T-cell (primary cell): ENCODE measurements at regions of chr2 and their contacts with region 1.

Region 1: DNA sequence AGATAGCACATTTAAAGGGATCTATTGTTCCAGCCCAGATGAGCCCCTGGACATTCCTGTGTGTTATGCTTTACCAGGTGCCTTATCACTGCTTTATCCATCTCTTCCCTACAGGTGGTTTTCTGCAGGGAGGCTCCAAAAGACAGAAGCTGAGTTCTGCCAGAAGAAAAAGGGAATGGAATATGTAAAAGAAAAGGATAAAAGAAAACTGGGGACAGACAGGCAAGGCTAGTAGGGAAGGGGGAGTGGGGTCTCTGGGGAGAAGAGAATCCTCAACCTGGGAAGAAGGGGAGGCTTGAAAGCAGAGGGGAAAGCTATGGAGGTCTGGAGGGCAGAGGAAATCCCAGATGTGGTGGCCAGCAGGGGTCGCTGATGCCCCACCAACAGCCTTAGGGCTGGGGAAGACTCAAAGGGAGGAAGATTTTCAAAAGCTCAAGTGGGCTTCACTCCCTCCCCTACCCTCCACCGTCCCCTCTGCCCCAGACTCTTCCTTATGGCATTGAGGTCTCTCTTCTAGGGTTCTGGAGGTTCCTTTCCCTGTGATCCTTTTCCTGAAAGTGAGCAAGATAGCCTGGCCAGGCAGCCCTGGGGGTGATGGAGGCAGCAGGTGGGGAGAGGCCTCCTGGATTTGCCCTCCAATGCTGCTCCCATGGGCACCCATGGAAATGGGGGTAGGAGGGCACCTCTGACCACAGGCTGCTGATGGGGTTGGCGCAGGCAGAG is 178.1 kb upstream of the PKDCC start:
- DNase-seq: peak; percentile 17 to 85 (median 65)
- ATAC-seq: peak; percentile 65 to 79 (median 74)
- H3K4me3 ChIP-seq: no peak overlapping the region
- H3K4me3 Mint-ChIP-seq: no peak overlapping the region
- H3K27ac ChIP-seq: no peak overlapping the region
- H3K27ac Mint-ChIP-seq: peak overlapping the region in 1 of 2 donors; percentile 44
- H3K4me1 ChIP-seq: peaks cover 0 to 20% of the 10 kb centered on the region in 2 experiments
- H3K4me1 Mint-ChIP-seq: peaks cover 0 to 31% (median 7%) of the 10 kb centered on the region in 3 donors
- H3K27me3 ChIP-seq: peaks cover 0 to 25% of the 10 kb centered on the region in 2 experiments
- H3K27me3 Mint-ChIP-seq: peaks cover 0 to 7% of the 10 kb centered on the region in 2 donors

Region 2: GRCh38 chr2:41729800-41730364 is 139.8 kb before region 1 on chr2:
- CTCF ChIA-PET with region 1: no interaction called
- POLR2A ChIA-PET with region 1: no interaction called
- DNase-seq: no peak
- ATAC-seq: no peak
- H3K4me3 ChIP-seq: no peak overlapping the region
- H3K4me3 Mint-ChIP-seq: no peak overlapping the region
- H3K27ac ChIP-seq: no peak overlapping the region
- H3K27ac Mint-ChIP-seq: no peak overlapping the region
- H3K4me1 ChIP-seq: no peaks in the 10 kb centered on the region
- H3K4me1 Mint-ChIP-seq: no peaks in the 10 kb centered on the region
- H3K27me3 ChIP-seq: peaks cover 0 to 8% of the 10 kb centered on the region in 2 experiments
- H3K27me3 Mint-ChIP-seq: peaks cover 13 to 22% of the 10 kb centered on the region in 2 donors

Region 3: GRCh38 chr2:41840702-41841551 is 28.8 kb before region 1 on chr2:
- CTCF ChIA-PET with region 1: interaction called, 3 to 20 read pairs
- POLR2A ChIA-PET with region 1: no interaction called
- DNase-seq: peak; percentile 94 to 99 (median 97)
- ATAC-seq: peak; percentile 99
- H3K4me3 ChIP-seq: peak overlapping the region; percentile 81 to 97
- H3K4me3 Mint-ChIP-seq: peak overlapping the region; percentile 90 to 94 (median 94)
- H3K27ac ChIP-seq: peak overlapping the region; percentile 87
- H3K27ac Mint-ChIP-seq: peak overlapping the region; percentile 95 to 97
- H3K4me1 ChIP-seq: peaks cover 0 to 17% of the 10 kb centered on the region in 2 experiments
- H3K4me1 Mint-ChIP-seq: peaks cover 8 to 13% (median 12%) of the 10 kb centered on the region in 3 donors
- H3K27me3 ChIP-seq: no peaks in the 10 kb centered on the region
- H3K27me3 Mint-ChIP-seq: peaks cover 19 to 27% of the 10 kb centered on the region in 2 donors

Region 4: GRCh38 chr2:42086500-42086953 is 216.8 kb after region 1 on chr2:
- CTCF ChIA-PET with region 1: interaction called, 38 to 163 read pairs
- POLR2A ChIA-PET with region 1: interaction called in 1 of 2 experiments, 3 read pairs
- DNase-seq: peak in 15 of 35 experiments; percentile 10 to 76 (median 30)
- ATAC-seq: peak; percentile 56 to 61 (median 58)
- H3K4me3 ChIP-seq: no peak overlapping the region
- H3K4me3 Mint-ChIP-seq: no peak overlapping the region
- H3K27ac ChIP-seq: no peak overlapping the region
- H3K27ac Mint-ChIP-seq: no peak overlapping the region
- H3K4me1 ChIP-seq: peaks cover 0 to 4% of the 10 kb centered on the region in 2 experiments
- H3K4me1 Mint-ChIP-seq: peaks cover 6 to 14% (median 10%) of the 10 kb centered on the region in 3 donors
- H3K27me3 ChIP-seq: peaks cover 0 to 7% of the 10 kb centered on the region in 2 experiments
- H3K27me3 Mint-ChIP-seq: peaks cover 5 to 7% of the 10 kb centered on the region in 2 donors

Region 5: GRCh38 chr2:42238644-42239288 is 369.1 kb after region 1 on chr2:
- CTCF ChIA-PET with region 1: interaction called in 1 of 2 experiments, 10 read pairs
- POLR2A ChIA-PET with region 1: no interaction called
- DNase-seq: peak in 31 of 35 experiments; percentile 5 to 57 (median 28)
- ATAC-seq: peak; percentile 64 to 83 (median 74)
- H3K4me3 ChIP-seq: no peak overlapping the region
- H3K4me3 Mint-ChIP-seq: peak overlapping the region in 1 of 3 donors; percentile 21
- H3K27ac ChIP-seq: no peak overlapping the region
- H3K27ac Mint-ChIP-seq: peak overlapping the region; percentile 52 to 66
- H3K4me1 ChIP-seq: peaks cover 2 to 25% of the 10 kb centered on the region in 2 experiments
- H3K4me1 Mint-ChIP-seq: peaks cover 92 to 94% (median 94%) of the 10 kb centered on the region in 3 donors
- H3K27me3 ChIP-seq: no peaks in the 10 kb centered on the region
- H3K27me3 Mint-ChIP-seq: no peaks in the 10 kb centered on the region

Region 6: GRCh38 chr2:42328148-42328833 is 458.6 kb after region 1 on chr2:
- CTCF ChIA-PET with region 1: interaction called, 6 to 13 read pairs
- POLR2A ChIA-PET with region 1: no interaction called
- DNase-seq: peak in 1 of 35 experiments; percentile 51
- ATAC-seq: peak in 2 of 4 experiments; percentile 40 to 42
- H3K4me3 ChIP-seq: no peak overlapping the region
- H3K4me3 Mint-ChIP-seq: no peak overlapping the region
- H3K27ac ChIP-seq: peak overlapping the region; percentile 9
- H3K27ac Mint-ChIP-seq: peak overlapping the region; percentile 51 to 79
- H3K4me1 ChIP-seq: no peaks in the 10 kb centered on the region
- H3K4me1 Mint-ChIP-seq: peaks cover 2 to 6% (median 5%) of the 10 kb centered on the region in 3 donors
- H3K27me3 ChIP-seq: no peaks in the 10 kb centered on the region
- H3K27me3 Mint-ChIP-seq: no peaks in the 10 kb centered on the region